ENCODE measurements at regions of chr17 and their contacts with region 1.

Region 1: GRCh38 chr17:4948931-4949320 is 596 bp upstream of the PFN1 start:
- DNase-seq: peak; percentile 78 to 94
- H3K4me3 ChIP-seq: peak overlapping the region; percentile 93 to 100
- H3K27ac ChIP-seq: peak overlapping the region; percentile 95 to 99
- H3K4me1 ChIP-seq: peaks cover 6 to 60% (median 48%) of the 10 kb centered on the region in 4 donors
- H3K27me3 ChIP-seq: no peaks in the 10 kb centered on the region
- CTCF ChIP-seq: no peak

Region 2: DNA sequence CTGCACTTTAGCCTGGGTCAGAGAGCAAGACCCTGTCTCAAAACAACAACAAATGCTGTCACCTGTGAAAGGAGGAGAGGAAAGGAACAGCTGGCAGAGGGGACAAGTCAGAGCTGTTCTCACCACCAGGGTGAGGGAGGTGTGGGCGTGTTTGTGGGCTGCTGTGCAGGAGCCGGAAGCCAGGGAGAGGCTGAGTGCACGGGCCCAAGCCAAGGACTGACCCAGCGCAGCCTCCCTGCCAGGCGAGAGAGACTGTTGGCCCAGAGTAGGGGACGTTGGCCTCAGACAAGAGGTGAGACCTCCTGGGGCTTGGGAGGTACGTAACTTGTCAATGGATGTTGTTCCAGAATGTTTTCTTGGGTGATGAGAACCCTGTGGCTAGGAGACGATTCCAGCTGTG is 439.5 kb before region 1 on chr17:
- intact Hi-C with region 1: no loop called
- DNase-seq: peak; percentile 45 to 83
- H3K4me3 ChIP-seq: no peak overlapping the region
- H3K27ac ChIP-seq: peak overlapping the region; percentile 74 to 75
- H3K4me1 ChIP-seq: peaks cover 0 to 69% (median 31%) of the 10 kb centered on the region in 4 donors
- H3K27me3 ChIP-seq: no peaks in the 10 kb centered on the region
- CTCF ChIP-seq: peak; percentile 12 to 17

Region 3: DNA sequence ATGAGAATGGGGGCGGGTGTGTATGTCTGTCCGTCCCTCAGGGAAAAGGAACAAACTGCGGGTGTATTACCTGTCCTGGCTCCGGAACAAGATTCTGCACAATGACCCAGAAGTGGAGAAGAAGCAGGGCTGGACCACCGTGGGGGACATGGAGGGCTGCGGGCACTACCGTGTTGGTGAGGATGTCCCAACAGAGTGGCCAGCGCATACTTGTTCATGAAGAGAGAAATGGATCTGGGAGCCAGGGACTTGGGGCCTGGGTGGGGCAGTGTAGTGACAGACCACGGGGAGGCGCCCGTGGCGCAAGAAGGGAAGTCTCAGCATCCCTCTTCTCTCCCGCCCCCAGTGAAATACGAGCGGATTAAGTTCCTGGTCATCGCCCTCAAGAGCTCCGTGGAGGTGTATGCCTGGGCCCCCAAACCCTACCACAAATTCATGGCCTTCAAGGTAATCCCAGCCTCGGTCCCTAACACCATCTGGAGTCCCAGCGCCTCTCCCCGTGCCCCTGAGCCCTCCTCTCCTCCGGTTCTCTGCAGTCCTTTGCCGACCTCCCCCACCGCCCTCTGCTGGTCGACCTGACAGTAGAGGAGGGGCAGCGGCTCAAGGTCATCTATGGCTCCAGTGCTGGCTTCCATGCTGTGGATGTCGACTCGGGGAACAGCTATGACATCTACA is 53.1 kb before region 1 on chr17:
- intact Hi-C with region 1: no loop called
- DNase-seq: no peak
- H3K4me3 ChIP-seq: no peak overlapping the region
- H3K27ac ChIP-seq: no peak overlapping the region
- H3K4me1 ChIP-seq: peaks cover 0 to 25% (median 18%) of the 10 kb centered on the region in 4 donors
- H3K27me3 ChIP-seq: peaks cover 0 to 24% of the 10 kb centered on the region in 2 donors
- CTCF ChIP-seq: no peak

Region 4: DNA sequence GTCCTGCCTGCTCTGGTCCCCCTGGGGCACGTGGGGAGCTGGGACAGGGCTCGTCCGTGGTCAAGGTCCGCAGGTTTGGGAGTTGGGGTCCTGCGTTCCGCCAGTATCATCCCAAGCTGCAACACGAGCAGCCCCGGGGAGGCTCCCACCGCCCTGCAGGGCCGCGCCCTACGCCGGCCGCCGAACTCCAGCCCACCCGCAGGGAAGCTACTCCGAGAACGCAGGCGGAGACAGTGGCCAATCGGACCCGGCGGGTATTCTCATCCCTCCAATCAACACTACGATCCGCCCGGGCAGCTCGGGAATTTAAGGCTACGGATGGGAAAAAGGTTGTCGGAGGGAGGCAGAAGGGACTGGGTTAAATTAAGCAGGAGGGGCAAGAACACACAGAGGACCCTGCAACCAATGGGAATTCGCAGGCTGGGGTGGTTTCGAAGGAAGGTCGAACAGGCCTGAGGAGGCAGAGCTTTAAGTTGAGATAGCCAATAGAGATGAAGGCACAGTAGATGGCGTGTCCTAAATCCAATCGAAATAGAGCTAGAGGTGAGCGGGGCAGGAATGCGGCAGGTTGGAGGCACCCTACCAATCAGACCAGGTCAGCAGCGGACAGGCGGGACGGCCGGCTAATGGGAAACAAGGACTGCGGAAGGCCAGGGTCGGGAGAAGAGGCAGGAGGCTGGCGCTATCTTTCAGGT is 18.1 kb after region 1 on chr17:
- intact Hi-C with region 1: loop called (anchors 2 kb)
- DNase-seq: peak; percentile 99
- H3K4me3 ChIP-seq: peak overlapping the region; percentile 66 to 75
- H3K27ac ChIP-seq: peak overlapping the region; percentile 90 to 92
- H3K4me1 ChIP-seq: peaks cover 0 to 34% (median 32%) of the 10 kb centered on the region in 4 donors
- H3K27me3 ChIP-seq: no peaks in the 10 kb centered on the region
- CTCF ChIP-seq: no peak

Region 5: DNA sequence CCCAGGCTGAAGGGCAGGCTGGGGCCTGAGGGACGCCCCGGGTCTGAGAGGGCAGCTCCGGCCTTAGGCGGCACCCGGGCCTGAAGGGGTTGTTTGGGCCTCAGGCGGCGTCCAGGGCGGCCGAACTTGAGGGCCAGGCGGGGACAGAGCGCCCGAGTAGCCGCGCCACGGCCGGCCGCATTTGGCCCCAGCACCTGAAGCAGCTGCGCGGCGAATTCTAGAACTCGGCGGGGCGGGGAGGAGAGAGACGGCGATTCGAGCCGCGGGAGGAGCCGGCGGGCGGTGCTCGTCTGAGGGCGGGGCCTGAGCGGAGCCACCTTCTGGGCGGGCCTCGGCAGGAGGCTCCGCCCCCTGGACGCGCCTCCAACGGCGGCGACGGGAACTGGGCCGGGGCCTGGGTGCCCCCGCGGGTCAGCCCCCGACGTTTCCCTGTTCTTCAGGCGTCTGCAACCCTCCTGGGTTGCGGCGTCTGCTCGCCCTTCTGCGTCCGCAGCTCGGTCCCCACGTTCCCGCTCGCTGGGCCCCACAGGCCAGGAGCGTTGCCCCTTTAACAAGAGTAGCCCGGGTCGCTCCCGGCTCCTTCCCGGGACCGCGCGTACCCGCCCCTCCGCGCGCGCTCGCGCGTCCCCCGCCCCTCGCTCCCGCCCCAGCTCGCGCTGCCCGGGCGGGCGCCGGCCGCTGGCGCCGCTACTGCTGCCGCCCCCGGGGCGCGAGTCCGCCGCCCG is 48.5 kb after region 1 on chr17 and contains the starts of genes INCA1 and KIF1C:
- intact Hi-C with region 1: loop called (anchors 5 kb)
- DNase-seq: peak; percentile 90 to 96
- H3K4me3 ChIP-seq: peak within 1 kb of the TSS; percentile 85 to 100
- H3K27ac ChIP-seq: peak within 1 kb of the TSS; percentile 94 to 97
- H3K4me1 ChIP-seq: peaks cover 0 to 37% (median 31%) of the 10 kb centered on the region in 4 donors
- H3K27me3 ChIP-seq: no peaks in the 10 kb centered on the region
- CTCF ChIP-seq: peak; percentile 24 to 43